ENCODE measurements at regions of chr7 and their contacts with region 1.

Region 1: DNA sequence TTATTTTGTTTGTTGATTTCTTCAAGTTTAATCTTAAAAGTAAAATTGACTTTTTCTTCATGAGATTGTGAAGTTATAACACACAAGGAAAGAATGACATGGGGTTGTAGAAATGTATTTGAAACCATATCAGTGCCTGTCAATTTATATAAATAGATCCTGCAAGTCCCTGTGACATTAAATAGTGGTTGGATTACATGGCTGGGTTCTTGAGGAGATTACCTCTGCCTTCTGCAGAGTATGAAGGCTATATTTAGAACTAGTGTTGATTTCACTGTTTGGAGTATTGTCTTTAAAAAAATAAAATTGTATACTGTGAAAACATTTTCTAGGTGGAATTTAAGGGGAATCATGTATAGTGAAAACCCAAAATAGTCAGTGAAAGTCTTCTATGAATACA is 385.8 kb upstream of the SMIM30 start:
- DNase-seq: no peak
- ATAC-seq: no peak
- H3K4me3 ChIP-seq: no peak overlapping the region
- H3K27ac ChIP-seq: no peak overlapping the region
- H3K4me1 ChIP-seq: no peaks in the 10 kb centered on the region
- H3K27me3 ChIP-seq: no peaks in the 10 kb centered on the region
- CTCF ChIP-seq: no peak
- EP300 ChIP-seq: no peak
- POLR2A ChIP-seq: no peak
- RAD21 ChIP-seq: no peak

Region 2: GRCh38 chr7:112970771-112971170 is 533.4 kb before region 1 on chr7:
- CTCF ChIA-PET with region 1: no interaction called
- POLR2A ChIA-PET with region 1: no interaction called
- in situ Hi-C with region 1: loop called (anchors 5 kb)
- intact Hi-C with region 1: no loop called
- DNase-seq: peak in 3 of 4 experiments; percentile 27 to 43 (median 29)
- ATAC-seq: peak; percentile 88
- H3K4me3 ChIP-seq: no peak overlapping the region
- H3K27ac ChIP-seq: no peak overlapping the region
- H3K4me1 ChIP-seq: no peaks in the 10 kb centered on the region
- H3K27me3 ChIP-seq: no peaks in the 10 kb centered on the region
- CTCF ChIP-seq: peak in 2 of 3 experiments; percentile 16 to 32; a peak in 2 of 6 replicates
- EP300 ChIP-seq: no peak
- POLR2A ChIP-seq: no peak
- RAD21 ChIP-seq: no peak